Esophagus muscularis mucosa (tissue), 4 donors: ENCODE measurements at regions of chrX and their contacts with region 1.

Region 1: GRCh38 chrX:19887911-19888879 is 795 bp upstream of the SH3KBP1 start:
- DNase-seq: no peak
- H3K4me3 ChIP-seq: peak overlapping the region; percentile 73 to 81 (median 75)
- H3K27ac ChIP-seq: peak overlapping the region; percentile 54 to 70 (median 62)
- H3K4me1 ChIP-seq: peaks cover 0 to 13% (median 13%) of the 10 kb centered on the region in 4 donors
- H3K27me3 ChIP-seq: no peaks in the 10 kb centered on the region
- CTCF ChIP-seq: peak; percentile 49 to 62 (median 58)
- EP300 ChIP-seq: no peak
- POLR2A ChIP-seq: no peak

Region 2: GRCh38 chrX:19372170-19372546 is 516.0 kb before region 1 on chrX:
- intact Hi-C with region 1: loop called (anchors 10 kb)
- DNase-seq: no peak
- H3K4me3 ChIP-seq: peak overlapping the region; percentile 45 to 58 (median 48)
- H3K27ac ChIP-seq: no peak overlapping the region
- H3K4me1 ChIP-seq: peaks cover 0 to 13% (median 12%) of the 10 kb centered on the region in 4 donors
- H3K27me3 ChIP-seq: no peaks in the 10 kb centered on the region
- CTCF ChIP-seq: peak; percentile 51 to 69 (median 53)
- EP300 ChIP-seq: no peak
- POLR2A ChIP-seq: no peak

Region 3: GRCh38 chrX:19593690-19594089 is 294.5 kb before region 1 on chrX:
- intact Hi-C with region 1: loop called (anchors 5 kb)
- DNase-seq: no peak
- H3K4me3 ChIP-seq: no peak overlapping the region
- H3K27ac ChIP-seq: no peak overlapping the region
- H3K4me1 ChIP-seq: peaks cover 0 to 4% (median 0%) of the 10 kb centered on the region in 4 donors
- H3K27me3 ChIP-seq: no peaks in the 10 kb centered on the region
- CTCF ChIP-seq: peak; percentile 34 to 46 (median 43)
- EP300 ChIP-seq: no peak
- POLR2A ChIP-seq: no peak

Region 4: DNA sequence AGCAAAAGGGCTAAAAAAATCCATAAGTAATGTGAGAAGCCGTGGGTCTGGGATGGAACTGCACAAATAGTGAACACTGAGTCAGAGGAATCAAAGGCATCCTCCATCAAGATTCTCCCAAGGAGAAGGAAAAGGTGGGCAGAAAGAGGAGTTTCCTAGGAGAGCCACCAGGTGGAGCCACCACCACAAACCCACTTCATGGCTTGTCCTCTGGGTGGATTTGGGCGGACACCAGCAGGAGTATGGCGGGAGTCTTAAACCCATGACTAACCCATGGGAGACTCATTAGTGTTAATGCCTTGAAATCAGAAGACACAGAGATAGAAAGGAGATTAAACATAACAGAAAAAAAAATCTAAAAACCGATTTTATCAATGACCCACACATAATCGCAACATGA is 148.5 kb before region 1 on chrX:
- intact Hi-C with region 1: loop called (anchors 2 kb)
- DNase-seq: peak; percentile 91
- H3K4me3 ChIP-seq: no peak overlapping the region
- H3K27ac ChIP-seq: no peak overlapping the region
- H3K4me1 ChIP-seq: no peaks in the 10 kb centered on the region
- H3K27me3 ChIP-seq: no peaks in the 10 kb centered on the region
- CTCF ChIP-seq: peak; percentile 58 to 63 (median 63)
- EP300 ChIP-seq: no peak
- POLR2A ChIP-seq: no peak